ENCODE measurements at regions of chr1 and their contacts with region 1.

Region 1: GRCh38 chr1:113042285-113043143 is 30.5 kb upstream of the LRIG2 start:
- DNase-seq: peak; percentile 85 to 96
- H3K4me3 ChIP-seq: peak overlapping the region in 3 of 4 experiments; percentile 14 to 37 (median 21); a peak in 5 of 8 replicates
- H3K27ac ChIP-seq: peak overlapping the region; percentile 92
- H3K4me1 ChIP-seq: peaks cover 15 to 35% (median 28%) of the 10 kb centered on the region in 4 experiments
- H3K27me3 ChIP-seq: no peaks in the 10 kb centered on the region
- CTCF ChIP-seq: peak; percentile 65 to 76 (median 68)
- EP300 ChIP-seq: peak in 1 of 2 experiments; percentile 54; a peak in 1 of 3 replicates
- POLR2A ChIP-seq: peak in 1 of 2 experiments; percentile 50; a peak in 1 of 3 replicates
- RAD21 ChIP-seq: peak; percentile 91 to 93

Region 2: DNA sequence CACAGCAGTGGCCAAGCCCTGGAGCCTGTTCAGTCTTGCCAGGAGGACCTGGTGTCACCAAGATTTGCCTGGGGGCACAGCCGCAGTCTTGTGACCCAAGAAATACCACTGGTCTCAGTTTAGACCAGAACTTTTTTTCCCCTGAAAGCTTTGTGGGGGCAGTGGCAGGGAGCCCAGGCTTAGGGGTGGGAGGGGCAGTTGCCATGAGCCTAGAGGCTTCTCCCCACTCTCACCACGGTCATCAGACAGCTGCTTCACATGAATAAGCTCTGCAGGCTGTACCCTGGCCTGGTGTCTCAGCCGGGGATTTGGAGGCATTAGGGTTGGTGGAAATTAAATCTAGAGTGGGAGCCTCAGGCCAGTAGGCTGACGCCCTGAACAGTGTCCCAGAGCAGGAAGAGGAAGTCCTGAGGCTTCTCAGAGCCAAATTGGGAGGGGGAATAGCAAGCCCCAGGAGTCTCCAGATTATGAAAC is 160.2 kb before region 1 on chr1:
- CTCF ChIA-PET with region 1: interaction called, 32 read pairs
- POLR2A ChIA-PET with region 1: interaction called, 17 read pairs
- DNase-seq: no peak
- H3K4me3 ChIP-seq: no peak overlapping the region
- H3K27ac ChIP-seq: no peak overlapping the region
- H3K4me1 ChIP-seq: peaks cover 0 to 14% (median 5%) of the 10 kb centered on the region in 4 experiments; a peak in 4 of 7 replicates
- H3K27me3 ChIP-seq: no peaks in the 10 kb centered on the region
- CTCF ChIP-seq: no peak
- EP300 ChIP-seq: no peak
- POLR2A ChIP-seq: no peak
- RAD21 ChIP-seq: no peak

Region 3: DNA sequence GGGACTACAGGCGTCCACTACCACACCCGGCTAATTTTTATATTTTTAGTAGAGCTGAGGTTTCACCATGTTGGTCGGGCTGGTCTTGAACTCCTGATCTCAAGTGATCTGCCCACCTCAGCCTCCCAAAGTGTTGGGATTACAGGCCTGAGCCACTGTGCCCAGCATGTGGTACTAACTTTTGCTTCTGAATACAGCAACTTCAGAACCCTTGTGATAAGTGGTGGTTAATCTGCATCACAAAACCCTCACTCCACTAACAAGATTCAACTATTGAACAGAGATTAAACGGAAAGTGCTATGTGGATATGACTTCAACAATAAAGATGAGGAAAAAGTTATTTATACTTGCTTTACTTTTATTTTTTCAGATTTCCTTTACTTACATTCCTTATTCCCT is 131.0 kb before region 1 on chr1:
- CTCF ChIA-PET with region 1: interaction called, 6 read pairs
- POLR2A ChIA-PET with region 1: interaction called, 32 read pairs
- DNase-seq: peak in 1 of 2 experiments; percentile 53
- H3K4me3 ChIP-seq: no peak overlapping the region; a peak in 1 of 8 replicates
- H3K27ac ChIP-seq: no peak overlapping the region
- H3K4me1 ChIP-seq: peaks cover 0 to 23% (median 19%) of the 10 kb centered on the region in 4 experiments; a peak in 6 of 7 replicates
- H3K27me3 ChIP-seq: no peaks in the 10 kb centered on the region
- CTCF ChIP-seq: no peak
- EP300 ChIP-seq: no peak
- POLR2A ChIP-seq: no peak
- RAD21 ChIP-seq: no peak

Region 4: DNA sequence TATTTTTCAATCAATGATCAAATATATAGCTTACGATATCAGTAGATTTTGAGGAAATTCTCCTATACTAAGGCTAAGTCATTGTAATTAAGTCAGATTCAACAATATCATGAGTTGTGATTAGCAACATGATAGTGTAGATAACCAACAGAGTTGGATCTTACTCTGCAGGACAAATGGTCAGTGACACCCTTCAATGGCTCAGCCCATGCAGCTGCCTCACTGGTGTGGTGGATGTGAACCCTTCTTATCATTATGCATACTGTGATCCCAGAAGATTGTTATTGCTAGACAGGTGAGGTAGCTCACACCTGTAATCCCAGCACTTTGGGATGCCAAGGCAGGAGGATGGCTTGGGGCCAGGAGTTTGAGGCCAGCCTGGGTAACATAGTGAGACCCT is 92.1 kb before region 1 on chr1:
- CTCF ChIA-PET with region 1: interaction called, 23 read pairs
- POLR2A ChIA-PET with region 1: interaction called, 23 read pairs
- DNase-seq: no peak
- H3K4me3 ChIP-seq: peak overlapping the region in 2 of 4 experiments; percentile 8 to 30; a peak in 3 of 8 replicates
- H3K27ac ChIP-seq: no peak overlapping the region
- H3K4me1 ChIP-seq: peaks cover 0 to 11% (median 6%) of the 10 kb centered on the region in 4 experiments; a peak in 4 of 7 replicates
- H3K27me3 ChIP-seq: no peaks in the 10 kb centered on the region
- CTCF ChIP-seq: no peak
- EP300 ChIP-seq: no peak
- POLR2A ChIP-seq: no peak
- RAD21 ChIP-seq: no peak

Region 5: DNA sequence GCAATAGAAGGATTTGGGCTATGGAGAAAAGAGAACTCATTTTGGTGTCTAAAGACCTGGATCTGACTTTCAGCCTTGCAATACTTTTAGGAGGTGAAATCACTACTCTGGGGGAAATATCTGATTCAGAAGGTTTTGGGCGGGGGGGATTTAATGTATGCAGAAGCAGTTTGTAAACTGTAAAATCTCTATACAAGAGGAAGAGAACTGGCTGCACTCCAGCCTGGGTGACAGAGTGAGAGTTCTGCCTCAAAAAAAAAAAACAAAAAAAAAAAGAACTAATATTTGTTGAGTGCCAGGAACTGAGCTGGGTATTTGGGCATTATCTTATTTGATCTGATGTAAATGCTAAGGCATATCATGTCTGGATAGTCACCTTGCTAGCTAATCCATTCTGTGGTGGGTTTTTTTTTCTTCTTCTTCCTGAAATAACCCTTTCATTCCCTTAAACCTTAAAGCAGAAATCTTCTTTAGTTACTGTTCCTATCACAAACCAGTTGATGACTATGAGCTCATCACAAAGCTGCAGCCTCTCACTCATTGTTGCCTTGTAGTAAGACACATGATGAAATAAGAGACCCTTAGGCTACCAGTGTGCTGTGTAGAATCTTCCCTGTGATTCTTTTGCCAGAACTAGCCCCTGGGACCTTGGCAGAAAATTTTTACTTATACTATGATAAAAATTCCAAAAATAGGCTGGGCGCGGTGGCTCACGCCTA is 51.0 kb before region 1 on chr1:
- CTCF ChIA-PET with region 1: interaction called, 5 read pairs
- POLR2A ChIA-PET with region 1: interaction called, 10 read pairs
- DNase-seq: no peak
- H3K4me3 ChIP-seq: no peak overlapping the region
- H3K27ac ChIP-seq: no peak overlapping the region
- H3K4me1 ChIP-seq: peaks cover 0 to 4% (median 1%) of the 10 kb centered on the region in 4 experiments; a peak in 2 of 7 replicates
- H3K27me3 ChIP-seq: no peaks in the 10 kb centered on the region
- CTCF ChIP-seq: no peak
- EP300 ChIP-seq: no peak
- POLR2A ChIP-seq: no peak
- RAD21 ChIP-seq: no peak

Region 6: DNA sequence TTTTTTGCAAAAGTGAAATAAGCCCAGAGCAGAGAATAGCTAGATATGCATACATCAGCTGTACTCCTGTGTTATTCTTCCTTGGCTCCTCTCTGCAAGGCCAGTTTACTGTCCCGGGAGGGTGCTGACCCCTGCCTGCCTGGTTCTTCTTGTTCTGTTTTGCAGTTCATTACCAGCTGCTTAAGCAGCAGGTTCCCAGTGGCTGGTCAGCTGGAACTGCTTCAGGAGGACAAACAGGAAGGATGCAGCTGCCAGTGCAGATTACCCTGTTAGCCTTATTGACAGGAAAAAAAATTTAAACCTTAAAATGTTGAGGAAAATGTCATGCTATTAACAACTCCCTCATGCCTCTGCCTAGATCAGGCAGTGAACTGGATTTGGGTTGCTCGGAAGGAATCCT is 14.5 kb after region 1 on chr1:
- CTCF ChIA-PET with region 1: interaction called, 21 read pairs
- POLR2A ChIA-PET with region 1: interaction called, 21 read pairs
- DNase-seq: no peak
- H3K4me3 ChIP-seq: no peak overlapping the region
- H3K27ac ChIP-seq: peak overlapping the region; percentile 27; the same call in 1 of the 2 replicates
- H3K4me1 ChIP-seq: peaks cover 3 to 13% (median 11%) of the 10 kb centered on the region in 4 experiments; a peak in 4 of 7 replicates
- H3K27me3 ChIP-seq: no peaks in the 10 kb centered on the region
- CTCF ChIP-seq: peak; percentile 9 to 15 (median 12); a peak in 3 of 4 replicates
- EP300 ChIP-seq: no peak
- POLR2A ChIP-seq: no peak
- RAD21 ChIP-seq: peak in 1 of 2 experiments; percentile 42; a peak in 2 of 4 replicates

Region 7: GRCh38 chr1:113557177-113557576 is 514.7 kb after region 1 on chr1:
- CTCF ChIA-PET with region 1: no interaction called
- POLR2A ChIA-PET with region 1: no interaction called
- DNase-seq: no peak
- H3K4me3 ChIP-seq: no peak overlapping the region
- H3K27ac ChIP-seq: no peak overlapping the region
- H3K4me1 ChIP-seq: no peaks in the 10 kb centered on the region
- H3K27me3 ChIP-seq: no peaks in the 10 kb centered on the region
- CTCF ChIP-seq: no peak
- EP300 ChIP-seq: no peak
- POLR2A ChIP-seq: no peak
- RAD21 ChIP-seq: no peak